ENCODE measurements at regions of chrX and their contacts with region 1.

Region 1: DNA sequence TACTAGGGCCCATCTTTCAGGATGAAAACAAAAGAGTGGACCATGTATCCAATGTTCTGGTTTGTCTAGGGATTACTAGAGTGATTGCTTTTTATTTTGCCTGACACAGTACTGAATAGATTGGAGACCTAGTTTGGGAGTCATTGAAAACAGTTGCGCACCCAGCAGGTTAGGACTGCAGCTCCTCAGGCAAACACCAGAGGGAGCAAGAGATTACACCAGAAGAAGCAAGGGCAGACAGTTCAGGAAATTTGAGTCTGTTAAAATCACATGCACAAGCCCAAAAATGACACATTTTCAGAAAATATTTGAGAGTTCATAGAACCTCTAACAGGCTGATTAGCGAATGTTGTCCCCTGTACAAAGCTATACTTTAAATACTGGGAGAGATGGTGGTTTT is 55.6 kb downstream of the CYLC1 start:
- DNase-seq: no peak
- ATAC-seq: no peak

Region 2: GRCh38 chrX:82115728-82116127 is 1800.8 kb before region 1 on chrX:
- intact Hi-C with region 1: loop called (anchors 10 kb)
- DNase-seq: no peak
- ATAC-seq: no peak

Region 3: DNA sequence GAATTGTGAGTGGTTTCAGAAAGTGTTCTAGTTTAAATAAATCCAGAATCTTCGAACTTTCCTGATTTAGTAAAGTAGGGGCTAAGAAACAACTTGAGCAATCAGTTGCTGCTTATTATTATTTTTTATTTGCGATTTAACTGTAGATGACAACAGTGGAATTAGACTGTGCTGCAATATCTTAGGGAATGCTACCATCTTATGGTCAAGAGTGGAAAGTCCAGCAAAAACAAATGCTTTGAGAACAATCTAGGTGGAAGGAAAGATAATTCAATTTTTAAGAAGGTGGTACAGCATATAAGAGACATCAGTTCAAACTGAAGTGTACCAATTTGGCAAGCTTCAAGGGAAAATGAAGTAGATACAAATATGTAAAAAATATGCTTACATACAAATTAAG is 17.7 kb after region 1 on chrX:
- intact Hi-C with region 1: no loop called
- DNase-seq: no peak
- ATAC-seq: no peak

Measured in sciatic nerve (tissue), 2 donors.